ENCODE measurements at regions of chrX and their contacts with region 1.

Region 1: DNA sequence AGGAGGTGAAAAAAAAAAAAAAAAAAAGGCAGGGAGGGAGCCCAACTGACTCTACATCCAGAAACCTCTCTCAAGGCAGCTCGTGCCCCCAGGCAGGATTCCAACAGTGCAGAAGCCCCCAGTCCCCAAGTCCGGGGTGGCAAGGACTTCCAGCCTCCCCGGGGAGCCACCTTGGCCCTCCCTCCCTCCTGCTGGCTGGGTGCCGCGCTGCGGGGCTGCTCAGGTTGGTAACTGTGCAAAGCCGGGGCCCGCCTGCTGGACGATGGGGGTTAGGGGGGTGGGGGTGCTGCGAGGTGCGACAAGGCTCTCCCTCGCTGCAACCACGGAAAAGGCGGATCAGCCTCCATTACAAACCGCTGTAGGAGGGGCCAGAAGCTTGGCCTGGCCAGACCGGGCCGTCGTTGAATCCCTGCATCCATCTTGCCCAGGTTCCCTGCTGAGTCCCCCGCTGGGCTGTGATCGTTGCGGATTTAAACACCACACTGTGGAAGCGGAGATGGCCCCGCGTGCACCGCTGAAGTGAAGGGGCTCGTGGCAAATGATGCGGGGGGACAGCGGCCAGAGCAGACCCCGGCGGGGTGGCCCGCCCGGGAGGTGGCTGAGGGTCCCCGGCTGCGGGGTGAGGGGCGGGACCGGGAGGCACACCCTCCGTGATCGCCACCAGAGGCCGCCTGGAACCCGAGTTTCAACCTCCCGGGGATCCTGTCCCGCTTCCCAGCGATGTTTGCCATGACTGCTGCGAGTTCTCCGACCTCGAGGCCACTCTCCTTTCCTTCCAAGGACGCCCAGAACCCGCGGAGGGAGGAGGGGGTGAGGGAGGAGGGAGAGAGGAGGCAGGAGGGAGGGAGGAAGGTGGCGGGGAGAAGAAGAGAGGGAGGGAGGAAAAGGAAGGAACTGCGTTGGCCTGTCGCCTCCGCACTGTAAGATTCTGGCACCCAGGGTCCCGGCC is 58.0 kb upstream of the DDX3X start:
- DNase-seq: peak; percentile 21
- ATAC-seq: peak; percentile 97
- H3K4me3 ChIP-seq: peak overlapping the region; percentile 54 to 77 (median 66)
- H3K27ac ChIP-seq: no peak overlapping the region
- H3K4me1 ChIP-seq: peaks cover 8% of the 10 kb centered on the region
- H3K27me3 ChIP-seq: no peaks in the 10 kb centered on the region; a peak in 1 of 5 replicates
- CTCF ChIP-seq: peak; percentile 84
- EP300 ChIP-seq: no peak
- POLR2A ChIP-seq: no peak
- RAD21 ChIP-seq: peak; percentile 77

Region 2: GRCh38 chrX:41293269-41293668 is 17.3 kb after region 1 on chrX:
- CTCF ChIA-PET with region 1: no interaction called
- POLR2A ChIA-PET with region 1: no interaction called
- in situ Hi-C with region 1: no loop called
- intact Hi-C with region 1: loop called (anchors 1 kb)
- DNase-seq: peak; percentile 11
- ATAC-seq: peak; percentile 90
- H3K4me3 ChIP-seq: no peak overlapping the region
- H3K27ac ChIP-seq: no peak overlapping the region
- H3K4me1 ChIP-seq: 0 out of 2 replicates have a peak, but pooled peaks cover 3% of the 10 kb centered on the region
- H3K27me3 ChIP-seq: no peaks in the 10 kb centered on the region
- CTCF ChIP-seq: peak; percentile 56
- EP300 ChIP-seq: no peak
- POLR2A ChIP-seq: no peak
- RAD21 ChIP-seq: no peak

Region 3: DNA sequence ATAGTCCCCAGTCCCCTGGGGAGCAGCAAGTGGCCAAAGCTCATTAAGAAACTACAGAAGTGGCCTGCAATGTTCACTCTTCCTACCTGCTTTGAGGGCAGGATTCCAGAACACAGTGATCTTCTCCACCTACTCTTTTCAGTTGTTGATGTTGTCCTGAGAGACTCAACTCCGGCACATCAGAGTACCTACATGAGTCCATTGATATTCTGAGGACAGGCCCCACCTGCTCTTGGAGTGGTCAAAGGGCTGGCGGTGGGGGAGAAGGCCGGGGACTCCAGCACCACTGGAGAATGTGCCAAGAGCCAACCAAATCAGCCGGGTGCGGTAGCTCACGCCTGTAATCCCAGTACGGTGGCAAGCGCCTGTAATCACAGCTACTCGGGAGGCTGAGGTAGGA is 28.2 kb after region 1 on chrX:
- CTCF ChIA-PET with region 1: no interaction called
- POLR2A ChIA-PET with region 1: no interaction called
- in situ Hi-C with region 1: no loop called
- intact Hi-C with region 1: no loop called
- DNase-seq: no peak
- ATAC-seq: no peak
- H3K4me3 ChIP-seq: no peak overlapping the region
- H3K27ac ChIP-seq: no peak overlapping the region
- H3K4me1 ChIP-seq: no peaks in the 10 kb centered on the region
- H3K27me3 ChIP-seq: no peaks in the 10 kb centered on the region
- CTCF ChIP-seq: no peak
- EP300 ChIP-seq: no peak
- POLR2A ChIP-seq: no peak
- RAD21 ChIP-seq: no peak

Region 4: DNA sequence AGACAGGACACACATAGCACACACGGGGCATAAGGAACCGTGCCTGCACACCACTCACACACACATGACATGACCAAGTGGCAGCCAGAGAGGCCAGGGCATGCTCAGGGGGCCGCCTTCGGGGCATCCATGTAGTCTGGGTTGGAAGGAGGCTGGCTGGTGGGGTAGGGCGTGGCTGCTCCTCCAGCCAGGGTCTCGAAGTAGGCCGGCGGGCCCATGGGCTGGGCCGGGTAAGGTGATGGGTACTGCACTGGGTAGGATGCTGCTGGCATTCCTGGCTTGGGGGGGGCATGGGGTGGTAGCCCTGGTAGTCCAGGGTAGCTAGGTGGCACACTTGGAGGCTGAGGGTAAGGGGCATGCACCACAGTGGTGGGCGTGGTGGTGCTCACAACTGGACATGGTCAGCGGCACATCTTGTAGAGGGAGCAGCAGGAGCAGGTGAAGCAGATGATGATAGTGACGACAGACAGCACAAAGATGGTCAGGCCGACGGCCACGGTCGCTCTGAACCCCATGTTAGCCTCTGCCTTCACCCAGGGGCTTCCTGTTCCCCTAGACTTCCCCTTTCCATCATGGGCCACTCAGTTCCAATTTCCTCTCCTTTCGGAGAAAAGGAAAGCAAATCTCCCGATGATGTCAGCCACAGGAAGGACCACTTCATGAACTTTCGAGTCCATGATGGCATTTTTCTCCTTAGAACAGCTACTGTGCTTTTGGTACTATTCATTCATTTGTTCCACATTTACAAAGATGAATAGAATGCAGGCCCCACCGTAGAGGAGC is 47.1 kb after region 1 on chrX:
- CTCF ChIA-PET with region 1: no interaction called
- POLR2A ChIA-PET with region 1: no interaction called
- in situ Hi-C with region 1: no loop called
- intact Hi-C with region 1: no loop called
- DNase-seq: no peak
- ATAC-seq: no peak
- H3K4me3 ChIP-seq: no peak overlapping the region
- H3K27ac ChIP-seq: no peak overlapping the region
- H3K4me1 ChIP-seq: peaks cover 8% of the 10 kb centered on the region
- H3K27me3 ChIP-seq: no peaks in the 10 kb centered on the region
- CTCF ChIP-seq: no peak
- EP300 ChIP-seq: no peak
- POLR2A ChIP-seq: no peak
- RAD21 ChIP-seq: no peak

Region 5: GRCh38 chrX:41333744-41334259 is 57.9 kb after region 1 on chrX and contains the start of gene DDX3X:
- CTCF ChIA-PET with region 1: interaction called, 4 read pairs
- POLR2A ChIA-PET with region 1: no interaction called
- in situ Hi-C with region 1: no loop called
- intact Hi-C with region 1: loop called (anchors 10 kb)
- DNase-seq: peak; percentile 75
- ATAC-seq: peak; percentile 66
- H3K4me3 ChIP-seq: peak within 1 kb of the TSS; percentile 72 to 88 (median 84)
- H3K27ac ChIP-seq: peak within 1 kb of the TSS; percentile 100
- H3K4me1 ChIP-seq: peaks cover 33% of the 10 kb centered on the region
- H3K27me3 ChIP-seq: no peaks in the 10 kb centered on the region; a peak in 1 of 5 replicates
- CTCF ChIP-seq: peak; percentile 29; the same call in 1 of the 2 replicates
- EP300 ChIP-seq: no peak
- POLR2A ChIP-seq: peak; percentile 99 to 100
- RAD21 ChIP-seq: no peak
- total RNA-seq, gene DDX3X: 239 and 370 TPM in 2 replicates

Region 6: GRCh38 chrX:41457613-41458192 is 181.8 kb after region 1 on chrX:
- CTCF ChIA-PET with region 1: interaction called, 3 read pairs
- POLR2A ChIA-PET with region 1: no interaction called
- in situ Hi-C with region 1: no loop called
- intact Hi-C with region 1: loop called (anchors 5 kb)
- DNase-seq: no peak
- ATAC-seq: no peak
- H3K4me3 ChIP-seq: no peak overlapping the region
- H3K27ac ChIP-seq: no peak overlapping the region
- H3K4me1 ChIP-seq: no peaks in the 10 kb centered on the region
- H3K27me3 ChIP-seq: no peaks in the 10 kb centered on the region
- CTCF ChIP-seq: peak; percentile 39
- EP300 ChIP-seq: no peak
- POLR2A ChIP-seq: no peak
- RAD21 ChIP-seq: no peak

Region 7: GRCh38 chrX:41475591-41476241 is 199.8 kb after region 1 on chrX:
- CTCF ChIA-PET with region 1: no interaction called
- POLR2A ChIA-PET with region 1: no interaction called
- in situ Hi-C with region 1: no loop called
- intact Hi-C with region 1: loop called (anchors 5 kb)
- DNase-seq: peak; percentile 35
- ATAC-seq: peak; percentile 81
- H3K4me3 ChIP-seq: peak overlapping the region in 2 of 3 experiments; percentile 16 to 54; a peak in 3 of 6 replicates
- H3K27ac ChIP-seq: peak overlapping the region; percentile 38
- H3K4me1 ChIP-seq: peaks cover 41% of the 10 kb centered on the region
- H3K27me3 ChIP-seq: no peaks in the 10 kb centered on the region
- CTCF ChIP-seq: no peak
- EP300 ChIP-seq: peak in 1 of 2 experiments; percentile 8; a peak in 1 of 4 replicates
- POLR2A ChIP-seq: no peak
- RAD21 ChIP-seq: no peak